Endothelial cell of umbilical vein (primary cell): ENCODE measurements at regions of chr16 and their contacts with region 1.

Region 1: DNA sequence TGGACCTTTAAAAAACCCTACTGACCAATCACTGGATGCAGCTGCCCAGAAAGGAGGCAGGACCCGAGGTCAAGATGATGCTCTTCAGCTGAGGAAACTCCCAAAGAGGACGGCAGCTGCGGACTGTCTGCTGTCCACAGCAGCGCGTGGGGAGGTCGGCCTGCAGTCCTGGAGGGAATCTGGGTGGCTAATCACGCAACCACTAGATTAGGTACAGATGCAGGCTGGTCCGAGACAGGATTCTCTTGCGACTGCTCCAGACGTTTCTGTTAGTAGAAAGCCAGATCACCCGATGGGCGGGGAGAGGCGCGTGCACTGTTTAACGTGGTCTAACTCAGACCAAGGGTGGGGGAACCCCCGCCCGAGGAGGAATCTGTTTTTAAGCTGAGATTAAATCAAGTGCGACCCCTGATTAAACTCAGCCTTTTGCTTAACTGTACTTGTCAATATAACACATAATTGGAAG is 8.8 kb downstream of the CTRB2 start:
- DNase-seq: no peak
- H3K4me3 ChIP-seq: no peak overlapping the region
- H3K27ac ChIP-seq: no peak overlapping the region
- H3K4me1 ChIP-seq: peaks cover 4% of the 10 kb centered on the region
- H3K27me3 ChIP-seq: peaks cover 5 to 7% of the 10 kb centered on the region in 2 experiments
- CTCF ChIP-seq: no peak
- POLR2A ChIP-seq: no peak

Region 2: DNA sequence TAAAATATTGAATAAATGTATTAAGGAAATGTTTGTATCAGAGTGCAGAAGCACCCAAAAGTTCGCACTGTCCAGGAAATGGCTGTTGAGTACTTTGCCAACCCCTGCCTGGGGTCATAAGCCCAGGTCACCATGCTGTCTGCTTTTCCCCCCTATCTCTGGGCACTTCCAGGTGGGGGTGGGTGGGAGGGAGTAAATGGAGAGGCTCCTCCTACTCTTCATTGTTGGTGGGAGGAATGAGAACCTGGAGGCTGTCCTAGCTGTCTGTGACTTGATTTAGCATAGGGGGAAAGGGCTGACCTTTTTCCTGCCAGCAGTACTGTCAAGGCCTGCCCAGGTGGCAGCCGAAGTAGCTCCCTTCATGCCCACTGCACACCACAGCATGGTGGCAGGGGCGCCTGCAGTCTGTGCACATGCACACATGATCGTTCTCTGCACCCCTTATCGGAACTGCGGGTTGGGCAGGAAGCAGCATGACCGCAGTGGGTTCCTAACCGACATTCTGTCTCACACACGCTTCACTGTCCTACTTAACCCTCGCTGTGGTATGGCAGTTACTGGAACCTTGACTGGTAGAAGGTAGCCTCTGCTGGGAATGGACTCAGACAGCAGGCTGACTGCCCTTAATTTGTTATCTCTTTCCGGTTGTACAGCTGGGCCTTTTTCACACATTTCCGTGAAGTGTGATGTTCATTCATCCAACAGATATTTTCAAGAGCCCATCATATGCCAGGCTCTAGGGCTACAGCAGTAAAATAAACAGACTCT is 123.1 kb before region 1 on chr16:
- CTCF ChIA-PET with region 1: no interaction called
- POLR2A ChIA-PET with region 1: no interaction called
- dilution Hi-C with region 1: no loop called
- intact Hi-C with region 1: no loop called
- DNase-seq: peak; percentile 56
- H3K4me3 ChIP-seq: no peak overlapping the region
- H3K27ac ChIP-seq: peak overlapping the region; percentile 35
- H3K4me1 ChIP-seq: peaks cover 13% of the 10 kb centered on the region
- H3K27me3 ChIP-seq: no peaks in the 10 kb centered on the region
- CTCF ChIP-seq: no peak
- POLR2A ChIP-seq: no peak

Region 3: GRCh38 chr16:75219838-75220237 is 21.7 kb after region 1 on chr16:
- CTCF ChIA-PET with region 1: interaction called, 14 read pairs
- POLR2A ChIA-PET with region 1: no interaction called
- dilution Hi-C with region 1: no loop called
- intact Hi-C with region 1: loop called (anchors 2 kb)
- DNase-seq: no peak
- H3K4me3 ChIP-seq: no peak overlapping the region
- H3K27ac ChIP-seq: no peak overlapping the region
- H3K4me1 ChIP-seq: no peaks in the 10 kb centered on the region
- H3K27me3 ChIP-seq: no peaks in the 10 kb centered on the region
- CTCF ChIP-seq: no peak
- POLR2A ChIP-seq: no peak

Region 4: DNA sequence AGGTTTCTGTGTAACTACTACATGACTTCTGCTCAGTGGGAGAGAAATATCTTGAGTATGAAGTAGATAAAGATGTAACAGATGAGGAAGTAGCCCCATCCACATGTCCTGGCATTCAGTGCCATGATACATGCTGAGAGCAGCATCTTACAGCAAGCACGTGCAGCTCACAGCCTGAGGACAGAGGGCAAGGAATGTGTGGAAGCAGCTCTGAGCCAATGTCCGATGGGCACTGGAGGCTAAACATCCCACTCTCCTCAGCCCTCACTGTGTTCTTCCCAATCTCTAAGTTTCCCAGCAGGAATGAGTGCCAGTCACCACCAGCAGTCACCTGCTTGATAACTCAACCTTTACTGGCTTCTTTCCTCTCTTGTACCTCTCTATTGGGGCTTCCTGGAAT is 194.7 kb after region 1 on chr16:
- CTCF ChIA-PET with region 1: interaction called, 12 read pairs
- POLR2A ChIA-PET with region 1: no interaction called
- dilution Hi-C with region 1: no loop called
- intact Hi-C with region 1: no loop called
- DNase-seq: no peak
- H3K4me3 ChIP-seq: no peak overlapping the region
- H3K27ac ChIP-seq: no peak overlapping the region
- H3K4me1 ChIP-seq: no peaks in the 10 kb centered on the region
- H3K27me3 ChIP-seq: no peaks in the 10 kb centered on the region
- CTCF ChIP-seq: no peak
- POLR2A ChIP-seq: no peak

Region 5: GRCh38 chr16:75420987-75421819 is 223.0 kb after region 1 on chr16:
- CTCF ChIA-PET with region 1: interaction called, 16 read pairs
- POLR2A ChIA-PET with region 1: no interaction called
- dilution Hi-C with region 1: no loop called
- intact Hi-C with region 1: no loop called
- DNase-seq: no peak
- H3K4me3 ChIP-seq: no peak overlapping the region
- H3K27ac ChIP-seq: no peak overlapping the region
- H3K4me1 ChIP-seq: no peaks in the 10 kb centered on the region
- H3K27me3 ChIP-seq: no peaks in the 10 kb centered on the region
- CTCF ChIP-seq: no peak
- POLR2A ChIP-seq: no peak

Region 6: GRCh38 chr16:75456971-75457370 is 258.8 kb after region 1 on chr16:
- CTCF ChIA-PET with region 1: interaction called, 23 read pairs
- POLR2A ChIA-PET with region 1: no interaction called
- dilution Hi-C with region 1: no loop called
- intact Hi-C with region 1: no loop called
- DNase-seq: no peak
- H3K4me3 ChIP-seq: no peak overlapping the region
- H3K27ac ChIP-seq: no peak overlapping the region
- H3K4me1 ChIP-seq: peaks cover 2% of the 10 kb centered on the region
- H3K27me3 ChIP-seq: no peaks in the 10 kb centered on the region
- CTCF ChIP-seq: no peak
- POLR2A ChIP-seq: no peak

Region 7: GRCh38 chr16:75519881-75520280 is 321.7 kb after region 1 on chr16:
- CTCF ChIA-PET with region 1: interaction called, 40 read pairs
- POLR2A ChIA-PET with region 1: no interaction called
- dilution Hi-C with region 1: no loop called
- intact Hi-C with region 1: loop called (anchors 1 kb)
- DNase-seq: no peak
- H3K4me3 ChIP-seq: no peak overlapping the region
- H3K27ac ChIP-seq: no peak overlapping the region
- H3K4me1 ChIP-seq: peaks cover 5% of the 10 kb centered on the region
- H3K27me3 ChIP-seq: no peaks in the 10 kb centered on the region
- CTCF ChIP-seq: no peak
- POLR2A ChIP-seq: no peak

Region 8: DNA sequence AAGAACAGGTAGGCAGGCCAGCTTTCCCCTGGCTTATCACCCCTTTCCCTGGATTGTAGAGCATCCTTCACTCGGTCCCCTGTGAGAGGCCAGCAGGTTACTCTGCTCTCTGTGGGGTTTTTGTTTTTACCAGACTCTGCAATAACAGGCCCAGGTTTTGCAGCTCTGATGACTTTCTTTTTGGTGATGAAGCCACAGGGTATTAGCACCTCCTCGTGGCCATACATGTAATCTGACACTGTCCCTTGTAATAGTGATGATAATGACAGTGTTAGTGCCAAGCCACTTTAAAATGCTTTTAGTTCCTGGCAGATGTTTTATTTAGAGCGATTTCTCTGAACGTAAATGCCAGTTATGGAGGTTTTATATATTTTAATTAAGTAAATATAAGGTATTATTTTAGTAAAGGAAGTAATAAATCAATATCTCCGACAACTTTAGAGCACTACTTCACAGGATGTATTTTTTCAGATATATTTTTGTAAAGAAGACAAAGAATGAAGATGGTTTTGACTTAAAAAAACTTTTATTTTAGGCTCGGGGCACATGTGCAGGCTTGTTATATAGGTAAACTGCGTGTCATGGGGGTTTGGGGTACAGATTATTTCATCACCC is 566.1 kb after region 1 on chr16:
- CTCF ChIA-PET with region 1: interaction called, 21 read pairs
- POLR2A ChIA-PET with region 1: no interaction called
- dilution Hi-C with region 1: no loop called
- intact Hi-C with region 1: loop called (anchors 1 kb)
- DNase-seq: peak; percentile 64
- H3K4me3 ChIP-seq: no peak overlapping the region
- H3K27ac ChIP-seq: no peak overlapping the region
- H3K4me1 ChIP-seq: no peaks in the 10 kb centered on the region
- H3K27me3 ChIP-seq: peaks cover 0 to 4% of the 10 kb centered on the region in 2 experiments
- CTCF ChIP-seq: peak; percentile 60 to 68
- POLR2A ChIP-seq: no peak